Activated CD4-positive, alpha-beta T cell treated with anti-CD3 and anti-CD28 coated beads for 36 hours (primary cell): ENCODE measurements at regions of chr1 and their contacts with region 1.

Region 1: DNA sequence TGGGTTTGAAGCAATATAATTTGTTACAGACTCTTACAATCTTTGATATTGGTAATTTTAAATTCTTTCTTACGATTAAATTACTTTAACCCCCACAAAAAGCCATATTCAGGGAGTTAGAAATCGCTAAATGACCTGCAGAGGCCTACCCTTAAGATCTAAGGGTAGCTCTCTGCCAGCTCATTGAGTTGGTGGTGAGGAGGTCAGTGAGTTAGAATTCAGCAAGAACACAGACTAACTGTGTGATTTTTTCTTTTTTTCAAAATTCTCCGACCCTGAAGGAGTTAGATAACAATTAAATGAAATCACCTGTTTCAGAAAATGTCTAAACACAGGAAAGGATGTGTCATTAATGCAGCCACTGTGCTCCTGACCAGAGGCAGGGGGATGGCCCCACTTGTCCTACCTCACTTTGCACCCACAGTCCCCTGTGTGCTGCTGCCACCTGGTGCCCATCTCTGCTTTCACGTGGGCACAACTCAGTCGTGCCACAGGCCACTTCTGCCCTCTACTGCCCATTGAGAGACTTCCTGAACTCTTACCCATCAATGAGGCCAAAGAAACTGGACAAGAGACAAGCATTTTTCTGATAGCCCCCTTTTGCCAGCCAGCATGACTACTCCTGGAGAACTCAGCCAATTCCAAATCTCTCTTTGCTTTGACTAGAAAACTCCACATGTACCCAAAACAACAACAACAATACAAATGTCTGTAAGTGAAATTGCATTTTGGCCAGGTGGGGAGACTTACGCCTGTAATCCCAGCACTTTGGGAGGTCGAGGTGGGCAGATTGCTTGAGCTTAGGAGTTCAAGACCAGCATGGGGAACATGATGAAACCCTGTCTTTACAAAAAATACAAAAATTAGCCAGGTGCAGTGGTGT is 8.4 kb downstream of the CFAP45 start:
- DNase-seq: peak; percentile 88
- ATAC-seq: peak; percentile 98
- H3K4me3 Mint-ChIP-seq: no peak overlapping the region
- H3K27ac Mint-ChIP-seq: no peak overlapping the region
- H3K4me1 Mint-ChIP-seq: peaks cover 4% of the 10 kb centered on the region
- H3K27me3 Mint-ChIP-seq: no peaks in the 10 kb centered on the region

Region 2: DNA sequence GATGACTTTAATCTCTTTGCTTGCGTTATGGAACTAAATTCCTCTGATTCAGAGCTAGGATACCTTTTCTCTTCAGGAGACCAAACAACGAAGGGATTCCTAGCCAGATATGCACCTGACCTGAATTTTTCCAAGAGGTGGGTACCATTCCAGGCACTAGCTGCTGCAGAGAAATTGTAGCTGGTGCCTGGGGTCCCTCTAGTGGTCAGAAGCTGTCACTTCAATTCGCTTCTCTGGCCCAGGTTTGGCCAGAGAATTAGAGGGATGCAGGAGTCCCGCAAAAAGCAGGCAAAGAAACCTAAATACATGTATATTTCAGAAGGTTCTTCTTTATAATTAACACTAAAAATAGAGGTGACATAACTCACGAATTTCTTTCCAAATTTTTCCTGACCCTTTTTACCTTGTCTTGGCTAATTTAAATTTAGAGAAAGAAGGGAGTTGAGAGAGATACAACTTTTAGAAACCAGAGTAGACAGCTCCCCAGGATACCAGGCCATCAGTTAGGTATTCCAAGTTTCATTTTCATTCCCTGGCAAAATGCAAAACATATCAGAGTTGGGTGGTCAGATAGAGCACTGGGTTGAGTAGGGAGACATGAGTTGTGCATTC is 677.3 kb before region 1 on chr1:
- CTCF ChIA-PET with region 1: interaction called, 6 read pairs
- POLR2A ChIA-PET with region 1: no interaction called
- intact Hi-C with region 1: loop called in 1 of 2 experiments (anchors 2 kb)
- DNase-seq: peak; percentile 59
- ATAC-seq: no peak
- H3K4me3 Mint-ChIP-seq: no peak overlapping the region
- H3K27ac Mint-ChIP-seq: no peak overlapping the region
- H3K4me1 Mint-ChIP-seq: no peaks in the 10 kb centered on the region
- H3K27me3 Mint-ChIP-seq: peaks cover 36% of the 10 kb centered on the region

Region 3: GRCh38 chr1:159798893-159799292 is 92.6 kb before region 1 on chr1:
- CTCF ChIA-PET with region 1: interaction called, 150 read pairs
- POLR2A ChIA-PET with region 1: no interaction called
- intact Hi-C with region 1: loop called (anchors 1 kb)
- DNase-seq: peak; percentile 68
- ATAC-seq: peak; percentile 78
- H3K4me3 Mint-ChIP-seq: no peak overlapping the region
- H3K27ac Mint-ChIP-seq: no peak overlapping the region
- H3K4me1 Mint-ChIP-seq: peaks cover 12% of the 10 kb centered on the region
- H3K27me3 Mint-ChIP-seq: peaks cover 1% of the 10 kb centered on the region

Region 4: GRCh38 chr1:159839116-159839849 is 52.2 kb before region 1 on chr1:
- CTCF ChIA-PET with region 1: interaction called, 7 read pairs
- POLR2A ChIA-PET with region 1: no interaction called
- intact Hi-C with region 1: loop called in 1 of 2 experiments (anchors 5 kb)
- DNase-seq: no peak
- ATAC-seq: peak; percentile 58
- H3K4me3 Mint-ChIP-seq: no peak overlapping the region
- H3K27ac Mint-ChIP-seq: peak overlapping the region; percentile 44
- H3K4me1 Mint-ChIP-seq: peaks cover 14% of the 10 kb centered on the region
- H3K27me3 Mint-ChIP-seq: no peaks in the 10 kb centered on the region

Region 5: GRCh38 chr1:159872881-159873280 is 18.6 kb before region 1 on chr1:
- CTCF ChIA-PET with region 1: interaction called, 12 read pairs
- POLR2A ChIA-PET with region 1: no interaction called
- intact Hi-C with region 1: no loop called
- DNase-seq: no peak
- ATAC-seq: no peak
- H3K4me3 Mint-ChIP-seq: no peak overlapping the region
- H3K27ac Mint-ChIP-seq: no peak overlapping the region
- H3K4me1 Mint-ChIP-seq: no peaks in the 10 kb centered on the region
- H3K27me3 Mint-ChIP-seq: peaks cover 3% of the 10 kb centered on the region